GM12878 (cell line): ENCODE measurements at regions of chr16 and their contacts with region 1.

Region 1: DNA sequence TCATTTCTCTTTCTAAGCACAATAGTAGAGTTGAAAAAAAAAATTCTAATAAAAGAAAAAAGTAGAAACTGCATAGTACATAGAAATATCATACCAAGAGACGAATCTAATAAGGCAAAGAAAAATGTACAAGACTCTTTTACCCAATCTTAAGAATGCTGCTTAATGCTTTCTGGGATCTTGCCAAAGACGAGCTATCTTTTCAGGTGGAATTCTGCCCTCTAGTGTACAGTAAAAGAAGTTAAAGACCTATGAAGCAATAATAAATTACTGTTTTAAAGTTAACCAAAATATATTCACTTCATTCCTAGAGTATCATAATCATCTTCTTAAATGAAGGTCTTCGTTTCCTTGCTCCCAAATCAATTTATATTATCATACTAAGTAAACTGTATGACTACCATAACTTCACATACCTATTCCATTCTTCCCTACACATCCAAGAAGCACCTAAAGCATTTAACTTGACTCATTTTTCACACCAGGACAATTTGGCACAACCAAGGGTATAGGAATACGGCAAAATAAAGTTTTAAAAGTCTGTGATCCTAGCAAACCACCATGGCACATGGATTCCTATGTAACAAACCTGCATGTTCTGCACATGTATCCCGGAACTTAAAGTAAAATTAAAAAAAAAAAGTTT is 47.7 kb downstream of the CFDP1 start:
- DNase-seq: peak; percentile 33
- ATAC-seq: peak; percentile 67
- H3K4me3 ChIP-seq: no peak overlapping the region
- H3K27ac ChIP-seq: no peak overlapping the region
- H3K4me1 ChIP-seq: peaks cover 14% of the 10 kb centered on the region
- H3K27me3 ChIP-seq: no peaks in the 10 kb centered on the region
- CTCF ChIP-seq: peak; percentile 39 to 72 (median 49); a peak in 4 of 6 replicates
- EP300 ChIP-seq: no peak
- POLR2A ChIP-seq: no peak
- RAD21 ChIP-seq: peak; percentile 87

Region 2: GRCh38 chr16:75148311-75149195 is 237.1 kb before region 1 on chr16 and contains the start of gene ZFP1:
- CTCF ChIA-PET with region 1: no interaction called
- POLR2A ChIA-PET with region 1: no interaction called
- RAD21 ChIA-PET with region 1: no interaction called
- SMC1A ChIA-PET with region 1: no interaction called
- in situ Hi-C with region 1: no loop called
- intact Hi-C with region 1: no loop called
- DNase-seq: peak; percentile 56
- ATAC-seq: peak; percentile 91
- H3K4me3 ChIP-seq: peak within 1 kb of the TSS; percentile 88
- H3K27ac ChIP-seq: peak within 1 kb of the TSS; percentile 91
- H3K4me1 ChIP-seq: no peaks in the 10 kb centered on the region
- H3K27me3 ChIP-seq: no peaks in the 10 kb centered on the region
- CTCF ChIP-seq: no peak
- EP300 ChIP-seq: no peak
- POLR2A ChIP-seq: peak; percentile 83
- RAD21 ChIP-seq: no peak
- polyA plus RNA-seq, gene ZFP1: 3.5 to 3.6 TPM

Region 3: GRCh38 chr16:75203667-75204409 is 181.8 kb before region 1 on chr16:
- CTCF ChIA-PET with region 1: interaction called, 170 read pairs
- POLR2A ChIA-PET with region 1: interaction called, 6 read pairs
- RAD21 ChIA-PET with region 1: interaction called, 65 read pairs
- SMC1A ChIA-PET with region 1: interaction called, 52 read pairs
- in situ Hi-C with region 1: loop called (anchors 5 kb)
- intact Hi-C with region 1: loop called (anchors 1 kb)
- DNase-seq: no peak
- ATAC-seq: no peak
- H3K4me3 ChIP-seq: no peak overlapping the region
- H3K27ac ChIP-seq: no peak overlapping the region
- H3K4me1 ChIP-seq: peaks cover 8% of the 10 kb centered on the region
- H3K27me3 ChIP-seq: no peaks in the 10 kb centered on the region
- CTCF ChIP-seq: no peak
- EP300 ChIP-seq: no peak
- POLR2A ChIP-seq: no peak
- RAD21 ChIP-seq: no peak

Region 4: DNA sequence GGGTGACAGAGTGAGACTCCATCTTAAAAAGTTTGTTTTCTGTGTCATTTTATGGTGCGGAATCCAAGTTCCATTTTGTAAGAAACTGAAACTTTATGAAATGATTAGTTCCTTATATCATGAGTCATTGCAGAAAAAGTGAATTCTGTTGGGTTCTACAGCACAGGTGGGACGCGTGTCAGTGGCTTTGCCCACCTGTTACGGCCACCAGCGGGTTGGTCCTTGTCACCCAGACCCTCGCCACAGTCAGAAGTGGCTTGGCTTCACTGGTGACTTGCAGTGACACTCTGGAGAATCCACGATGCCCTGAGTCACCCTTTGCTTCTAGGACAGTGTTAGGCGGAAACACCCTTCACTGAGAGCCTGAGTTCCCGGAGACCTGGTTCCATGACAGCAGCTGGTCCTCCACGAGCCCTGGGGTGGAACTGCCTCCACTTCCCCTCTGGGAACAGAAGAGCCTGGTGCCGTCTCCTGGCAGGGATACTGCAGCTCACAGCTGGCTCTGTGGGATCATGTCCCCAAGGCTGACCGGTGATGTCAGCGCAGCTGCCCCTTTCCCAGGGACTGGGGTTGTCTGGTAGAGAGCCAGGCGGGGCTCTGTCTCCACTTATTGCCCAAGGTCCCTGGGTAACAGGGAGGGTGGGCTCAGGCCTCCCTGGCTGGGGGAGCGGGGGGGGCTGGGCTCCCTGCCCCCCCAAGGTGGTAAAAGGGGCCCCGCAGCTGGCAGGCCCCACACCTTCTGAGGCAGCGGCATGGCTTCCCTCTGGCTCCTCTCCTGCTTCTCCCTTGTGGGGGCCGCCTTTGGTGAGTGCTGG is 167.2 kb before region 1 on chr16 and contains the start of gene CTRB1:
- CTCF ChIA-PET with region 1: interaction called, 5 read pairs
- POLR2A ChIA-PET with region 1: no interaction called
- RAD21 ChIA-PET with region 1: interaction called, 8 read pairs
- SMC1A ChIA-PET with region 1: interaction called, 8 read pairs
- in situ Hi-C with region 1: no loop called
- intact Hi-C with region 1: loop called (anchors 5 kb)
- DNase-seq: no peak
- ATAC-seq: peak; percentile 79
- H3K4me3 ChIP-seq: no peak within 1 kb of the TSS
- H3K27ac ChIP-seq: peak within 1 kb of the TSS; percentile 20; the same call in 1 of the 2 replicates
- H3K4me1 ChIP-seq: peaks cover 20% of the 10 kb centered on the region
- H3K27me3 ChIP-seq: no peaks in the 10 kb centered on the region
- CTCF ChIP-seq: no peak
- EP300 ChIP-seq: no peak; a peak in 1 of 4 replicates
- POLR2A ChIP-seq: peak; percentile 52; the same call in 1 of the 2 replicates
- RAD21 ChIP-seq: no peak
- polyA plus RNA-seq, gene CTRB1: not detected

Region 5: GRCh38 chr16:75238132-75238852 is 147.3 kb before region 1 on chr16:
- CTCF ChIA-PET with region 1: interaction called, 243 read pairs
- POLR2A ChIA-PET with region 1: interaction called, 4 read pairs
- RAD21 ChIA-PET with region 1: interaction called, 150 read pairs
- SMC1A ChIA-PET with region 1: interaction called, 42 read pairs
- in situ Hi-C with region 1: loop called (anchors 5 kb)
- intact Hi-C with region 1: loop called (anchors 1 kb)
- DNase-seq: no peak
- ATAC-seq: no peak
- H3K4me3 ChIP-seq: no peak overlapping the region
- H3K27ac ChIP-seq: no peak overlapping the region
- H3K4me1 ChIP-seq: no peaks in the 10 kb centered on the region
- H3K27me3 ChIP-seq: no peaks in the 10 kb centered on the region
- CTCF ChIP-seq: no peak
- EP300 ChIP-seq: no peak
- POLR2A ChIP-seq: no peak
- RAD21 ChIP-seq: no peak

Region 6: DNA sequence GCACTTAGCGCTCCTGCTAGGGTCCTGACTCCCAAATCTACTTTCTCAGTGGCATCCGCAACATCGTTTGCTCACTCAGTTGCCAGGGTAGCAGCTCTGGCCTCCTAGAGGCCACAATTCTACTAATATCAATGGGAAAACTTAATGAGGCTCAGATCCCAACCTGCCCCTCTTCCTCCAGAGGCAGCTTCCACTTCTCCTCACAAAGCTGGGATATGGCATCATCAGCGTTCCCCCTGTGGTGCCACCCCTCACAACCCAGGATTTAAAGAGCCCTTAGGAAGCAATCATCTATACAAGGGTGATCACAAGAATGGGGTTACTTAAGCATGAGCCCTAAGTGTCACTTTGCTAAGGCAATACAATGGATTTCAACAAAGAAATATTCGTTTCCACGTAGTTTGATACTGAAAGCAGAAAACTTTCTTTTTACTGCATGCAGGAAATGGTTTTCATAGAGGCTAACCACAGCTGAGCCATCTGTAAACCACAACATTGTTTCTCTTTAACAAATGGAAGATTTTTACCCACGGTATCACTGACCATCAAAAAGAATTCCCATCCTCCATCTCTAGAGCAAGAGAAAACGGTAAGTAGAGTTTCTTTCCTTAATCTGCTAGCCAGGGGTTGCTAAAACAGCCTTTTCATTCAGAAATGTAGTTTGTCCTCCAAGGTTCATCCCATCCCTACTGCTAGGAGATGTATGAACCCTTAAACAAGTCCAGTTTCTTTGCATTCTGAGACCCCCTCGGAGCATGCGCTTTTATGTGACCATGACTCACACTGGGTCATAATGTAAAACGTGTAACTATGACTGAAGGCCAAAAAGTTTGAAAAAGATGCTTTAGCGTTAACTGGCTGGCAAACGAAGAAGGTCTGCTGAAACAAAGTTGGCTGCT is 65.9 kb before region 1 on chr16:
- CTCF ChIA-PET with region 1: interaction called, 39 read pairs
- POLR2A ChIA-PET with region 1: interaction called, 9 read pairs
- RAD21 ChIA-PET with region 1: interaction called, 41 read pairs
- SMC1A ChIA-PET with region 1: interaction called, 91 read pairs
- in situ Hi-C with region 1: no loop called
- intact Hi-C with region 1: loop called (anchors 1 kb)
- DNase-seq: peak; percentile 78
- ATAC-seq: peak; percentile 76
- H3K4me3 ChIP-seq: peak overlapping the region; percentile 4; the same call in 1 of the 2 replicates
- H3K27ac ChIP-seq: peak overlapping the region; percentile 79
- H3K4me1 ChIP-seq: peaks cover 34% of the 10 kb centered on the region
- H3K27me3 ChIP-seq: no peaks in the 10 kb centered on the region
- CTCF ChIP-seq: no peak
- EP300 ChIP-seq: peak; percentile 67 to 86; a peak in 3 of 4 replicates
- POLR2A ChIP-seq: no peak
- RAD21 ChIP-seq: 0 out of 2 replicates have a peak, but pooled peaks have one; percentile 14

Region 7: DNA sequence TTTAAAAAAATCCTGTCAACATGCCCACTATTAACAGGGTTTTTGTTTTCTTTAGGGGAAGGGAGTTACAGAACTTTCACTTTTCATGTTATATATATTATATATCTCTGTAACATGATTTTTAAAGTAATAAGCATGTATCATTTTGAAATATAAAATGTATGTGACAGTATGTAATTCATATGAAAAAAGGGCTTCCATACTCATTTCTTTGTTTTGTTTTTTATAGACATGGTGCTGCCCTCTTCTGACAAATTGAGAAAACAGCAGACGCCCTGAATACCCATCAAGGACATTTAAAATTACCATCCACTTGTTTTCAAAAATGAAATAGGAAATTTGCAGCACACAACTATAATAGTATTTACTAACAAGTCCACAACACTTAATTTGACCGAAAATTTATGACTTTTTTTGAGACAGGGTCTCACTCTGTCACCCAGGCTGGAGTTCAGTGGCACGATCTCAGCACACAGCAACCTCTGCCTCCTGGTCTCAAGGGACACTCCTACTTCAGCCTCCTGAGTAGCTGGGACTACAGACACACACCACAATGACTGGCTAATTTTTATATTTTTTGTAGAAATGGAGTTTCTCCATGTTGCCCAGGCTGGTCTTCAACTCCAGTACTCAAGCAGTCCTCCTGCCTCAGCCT is 17.3 kb after region 1 on chr16:
- CTCF ChIA-PET with region 1: interaction called, 10 read pairs
- POLR2A ChIA-PET with region 1: no interaction called
- RAD21 ChIA-PET with region 1: interaction called, 5 read pairs
- SMC1A ChIA-PET with region 1: interaction called, 17 read pairs
- in situ Hi-C with region 1: no loop called
- intact Hi-C with region 1: no loop called
- DNase-seq: no peak
- ATAC-seq: peak; percentile 59; the same call in 2 of the 3 replicates
- H3K4me3 ChIP-seq: no peak overlapping the region
- H3K27ac ChIP-seq: no peak overlapping the region
- H3K4me1 ChIP-seq: no peaks in the 10 kb centered on the region
- H3K27me3 ChIP-seq: no peaks in the 10 kb centered on the region
- CTCF ChIP-seq: peak; percentile 45 to 60 (median 55); a peak in 5 of 6 replicates
- EP300 ChIP-seq: no peak
- POLR2A ChIP-seq: no peak
- RAD21 ChIP-seq: peak; percentile 59